ENCODE measurements at regions of chr17 and their contacts with region 1.

Region 1: DNA sequence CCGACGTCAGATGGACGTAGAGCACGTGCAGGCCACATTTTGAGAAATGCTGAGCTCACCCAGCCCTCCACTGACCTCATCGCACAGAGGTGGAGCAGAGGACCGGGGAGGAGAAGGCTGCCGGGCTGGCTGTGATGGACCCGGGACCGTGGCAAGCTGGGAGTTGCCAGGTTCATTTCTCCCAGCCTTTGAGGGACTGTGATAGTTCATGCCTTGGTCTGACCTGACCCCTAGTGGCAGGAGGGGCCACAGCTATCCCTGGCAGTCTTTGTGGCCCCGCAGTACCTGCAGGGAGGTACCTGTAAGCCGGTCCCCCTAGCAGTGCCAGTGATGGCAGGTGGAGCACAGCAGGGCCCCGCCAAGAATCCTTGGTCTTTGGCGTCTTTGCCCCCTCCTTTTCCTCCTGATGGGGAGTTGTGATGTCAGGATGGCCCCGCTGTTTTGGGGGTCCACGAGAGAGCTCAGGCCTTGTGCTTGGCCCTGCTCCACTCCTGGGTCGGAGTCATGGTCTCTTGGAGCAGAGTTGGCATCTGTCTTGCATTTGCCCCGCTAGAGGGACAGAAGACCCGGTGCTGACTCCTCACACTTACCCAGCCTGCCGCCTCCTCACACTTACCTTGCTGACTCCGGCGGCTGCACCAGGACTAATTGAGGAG is 50.4 kb downstream of the OR1D5 start:
- DNase-seq: no peak
- H3K4me3 ChIP-seq: no peak overlapping the region
- H3K27ac ChIP-seq: no peak overlapping the region
- H3K4me1 ChIP-seq: no peaks in the 10 kb centered on the region
- H3K27me3 ChIP-seq: no peaks in the 10 kb centered on the region
- CTCF ChIP-seq: peak; percentile 62 to 83 (median 79)
- POLR2A ChIP-seq: no peak

Region 2: DNA sequence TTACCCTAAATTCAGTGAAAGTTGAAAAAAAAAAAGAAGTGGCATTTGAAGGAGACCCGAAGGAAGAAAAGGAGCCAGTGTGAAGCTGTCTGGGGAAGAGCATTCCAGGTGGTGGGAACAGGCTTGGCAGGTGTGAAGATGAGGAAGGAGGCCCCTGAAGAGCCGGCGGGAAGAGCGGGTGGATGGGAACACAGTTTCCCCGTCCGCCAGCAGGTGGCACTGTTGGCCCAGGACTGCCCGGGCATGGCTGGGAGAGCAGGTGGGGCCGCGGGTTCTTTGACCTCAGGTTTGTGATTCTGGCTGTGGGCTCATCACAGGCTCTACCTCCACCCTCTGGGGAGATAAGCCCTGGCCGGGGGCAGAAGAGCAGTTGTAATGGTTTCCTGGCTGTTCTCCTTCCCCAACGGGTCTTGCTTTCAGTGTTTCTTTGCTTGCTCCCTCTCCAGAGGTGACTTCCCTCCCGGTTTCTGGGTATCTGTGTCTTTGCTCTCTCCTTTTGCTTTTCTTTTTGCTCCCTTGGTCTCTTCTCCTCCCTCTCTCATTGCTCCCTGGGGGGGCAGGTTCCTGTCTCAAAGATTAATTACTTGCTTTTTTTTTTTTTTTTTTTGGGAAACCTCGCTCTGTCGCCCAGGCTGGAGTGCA is 184.5 kb before region 1 on chr17:
- intact Hi-C with region 1: loop called (anchors 1 kb)
- DNase-seq: no peak
- H3K4me3 ChIP-seq: no peak overlapping the region
- H3K27ac ChIP-seq: no peak overlapping the region
- H3K4me1 ChIP-seq: no peaks in the 10 kb centered on the region
- H3K27me3 ChIP-seq: no peaks in the 10 kb centered on the region
- CTCF ChIP-seq: peak; percentile 82 to 93 (median 92)
- POLR2A ChIP-seq: no peak

Region 3: DNA sequence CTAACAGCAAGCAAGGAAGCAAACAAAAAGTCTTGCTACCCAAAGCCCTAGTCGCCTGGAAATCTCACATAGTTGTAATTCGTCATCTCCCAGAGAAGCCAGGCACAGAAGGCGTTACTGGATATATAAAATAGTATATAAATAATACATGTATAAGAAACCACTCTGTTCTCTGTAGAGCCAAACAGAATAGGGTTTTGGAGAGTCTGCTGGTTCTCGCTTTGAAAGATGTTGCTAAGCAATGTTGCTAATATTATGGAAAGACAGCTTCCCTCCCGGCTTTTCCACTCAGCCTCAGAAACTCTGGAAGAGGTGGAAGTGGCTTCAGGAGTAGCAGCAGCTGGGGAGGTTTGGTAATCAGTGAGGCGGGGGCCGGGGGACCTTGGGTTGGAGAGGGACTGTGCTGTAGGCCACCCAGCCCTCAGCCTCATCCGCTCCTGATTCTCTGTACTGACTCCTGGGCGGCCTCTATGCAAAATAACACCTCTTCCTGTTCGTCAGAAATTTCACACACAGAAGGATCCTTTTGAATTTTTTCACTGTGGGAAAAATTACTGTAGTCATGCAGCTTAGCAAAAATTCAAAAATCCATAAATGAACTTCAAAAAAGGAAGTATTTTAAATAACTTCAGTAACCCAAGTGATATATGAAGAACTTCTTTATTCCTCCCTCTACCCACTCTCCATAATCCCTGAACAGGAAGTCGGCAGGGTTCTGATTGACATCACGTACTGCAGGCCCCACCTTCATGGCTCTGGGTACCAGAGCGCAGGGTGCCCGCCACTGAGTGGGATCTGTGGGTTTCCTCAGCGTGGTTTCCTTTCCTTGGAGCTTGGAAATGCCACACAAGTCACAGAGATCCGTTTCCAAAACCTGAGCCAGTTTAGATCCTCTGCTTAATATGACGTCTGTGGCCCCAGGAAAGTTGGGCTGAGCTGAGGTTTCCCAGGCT is 165.4 kb before region 1 on chr17:
- intact Hi-C with region 1: loop called (anchors 5 kb)
- DNase-seq: no peak
- H3K4me3 ChIP-seq: no peak overlapping the region
- H3K27ac ChIP-seq: no peak overlapping the region
- H3K4me1 ChIP-seq: peaks cover 8% of the 10 kb centered on the region
- H3K27me3 ChIP-seq: no peaks in the 10 kb centered on the region
- CTCF ChIP-seq: no peak
- POLR2A ChIP-seq: no peak

Measured in vagina (tissue), 2 donors.